ENCODE measurements at regions of chr12 and their contacts with region 1.

Region 1: GRCh38 chr12:110639336-110640141 is 25.6 kb downstream of the TCTN1 start:
- DNase-seq: no peak
- ATAC-seq: peak; percentile 67
- H3K4me3 ChIP-seq: no peak overlapping the region
- H3K27ac ChIP-seq: no peak overlapping the region
- H3K4me1 ChIP-seq: peaks cover 61% of the 10 kb centered on the region
- H3K27me3 ChIP-seq: no peaks in the 10 kb centered on the region
- CTCF ChIP-seq: no peak
- EP300 ChIP-seq: no peak
- POLR2A ChIP-seq: no peak
- RAD21 ChIP-seq: no peak

Region 2: GRCh38 chr12:110224379-110225304 is 414.9 kb before region 1 on chr12:
- CTCF ChIA-PET with region 1: no interaction called
- POLR2A ChIA-PET with region 1: no interaction called
- RAD21 ChIA-PET with region 1: no interaction called
- SMC1A ChIA-PET with region 1: no interaction called
- in situ Hi-C with region 1: no loop called
- intact Hi-C with region 1: no loop called
- DNase-seq: no peak
- ATAC-seq: no peak
- H3K4me3 ChIP-seq: no peak overlapping the region
- H3K27ac ChIP-seq: no peak overlapping the region
- H3K4me1 ChIP-seq: no peaks in the 10 kb centered on the region
- H3K27me3 ChIP-seq: no peaks in the 10 kb centered on the region
- CTCF ChIP-seq: 0 out of 6 replicates have a peak, but pooled peaks of 2 of the 3 experiments have one; percentile 5 to 7
- EP300 ChIP-seq: no peak
- POLR2A ChIP-seq: no peak
- RAD21 ChIP-seq: no peak

Region 3: GRCh38 chr12:110627500-110628195 is 11.9 kb before region 1 on chr12:
- CTCF ChIA-PET with region 1: interaction called, 46 read pairs
- POLR2A ChIA-PET with region 1: interaction called, 46 read pairs
- RAD21 ChIA-PET with region 1: interaction called, 11 read pairs
- SMC1A ChIA-PET with region 1: interaction called, 103 read pairs
- in situ Hi-C with region 1: no loop called
- intact Hi-C with region 1: no loop called
- DNase-seq: no peak
- ATAC-seq: peak; percentile 77
- H3K4me3 ChIP-seq: peak overlapping the region; percentile 23; the same call in 1 of the 2 replicates
- H3K27ac ChIP-seq: peak overlapping the region; percentile 16
- H3K4me1 ChIP-seq: peaks cover 11% of the 10 kb centered on the region
- H3K27me3 ChIP-seq: no peaks in the 10 kb centered on the region
- CTCF ChIP-seq: no peak
- EP300 ChIP-seq: no peak
- POLR2A ChIP-seq: no peak
- RAD21 ChIP-seq: no peak

Region 4: GRCh38 chr12:110684312-110684836 is 44.8 kb after region 1 on chr12:
- CTCF ChIA-PET with region 1: interaction called, 4 read pairs
- POLR2A ChIA-PET with region 1: interaction called, 11 read pairs
- RAD21 ChIA-PET with region 1: interaction called, 4 read pairs
- SMC1A ChIA-PET with region 1: interaction called, 5 read pairs
- in situ Hi-C with region 1: no loop called
- intact Hi-C with region 1: no loop called
- DNase-seq: no peak
- ATAC-seq: peak; percentile 2; the same call in 2 of the 3 replicates
- H3K4me3 ChIP-seq: peak overlapping the region; percentile 90
- H3K27ac ChIP-seq: peak overlapping the region; percentile 68
- H3K4me1 ChIP-seq: peaks cover 29% of the 10 kb centered on the region
- H3K27me3 ChIP-seq: no peaks in the 10 kb centered on the region
- CTCF ChIP-seq: no peak
- EP300 ChIP-seq: 0 out of 4 replicates have a peak, but pooled peaks of 1 of the 2 experiments have one; percentile 13
- POLR2A ChIP-seq: no peak
- RAD21 ChIP-seq: no peak

Measured in GM12878 (cell line).